ENCODE measurements at regions of chr4 and their contacts with region 1.

Region 1: DNA sequence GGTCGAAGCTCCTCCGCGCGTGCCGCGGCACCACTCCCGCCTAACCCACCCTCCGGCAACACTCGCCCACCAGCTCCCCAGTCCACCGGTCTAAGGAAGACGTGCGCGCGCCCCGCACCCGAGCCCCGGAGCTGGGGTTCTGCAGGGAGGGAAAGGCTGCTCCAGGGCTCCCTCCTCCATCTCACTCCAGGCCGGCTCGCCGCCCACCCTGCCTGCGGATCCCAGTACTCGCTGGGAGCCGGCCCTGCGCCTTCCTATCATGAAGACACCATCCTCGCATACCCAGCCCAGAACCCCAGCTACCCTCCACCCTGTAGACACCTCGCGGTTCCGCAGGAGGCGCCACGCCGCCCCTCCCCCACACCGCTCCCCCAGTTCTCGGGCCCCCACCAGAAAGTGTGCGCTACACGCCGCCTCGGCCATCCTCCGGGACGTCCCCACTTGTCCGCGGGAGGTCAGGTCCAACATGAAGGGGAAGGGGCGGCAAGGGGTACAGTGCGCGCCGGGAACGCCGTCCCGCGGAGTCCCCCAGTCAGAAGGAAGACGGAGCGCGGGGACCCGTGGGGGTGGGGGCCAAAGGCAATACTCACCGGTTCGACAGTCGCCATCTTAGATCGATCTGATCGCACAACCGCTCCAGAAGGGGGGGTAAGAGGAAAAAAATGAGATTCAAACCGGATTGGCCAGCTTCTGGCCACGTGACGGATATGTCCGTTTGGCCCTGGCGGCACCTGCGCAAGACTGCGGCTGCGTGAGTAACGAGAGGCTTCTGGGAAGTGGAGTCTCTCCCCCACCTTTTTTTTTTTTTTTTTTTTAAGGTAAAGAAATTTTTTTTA is at the start of gene EIF4E:
- DNase-seq: peak; percentile 81 to 99 (median 97)
- ATAC-seq: peak; percentile 88
- H3K4me3 ChIP-seq: peak within 1 kb of the TSS; percentile 96
- H3K4me3 Mint-ChIP-seq: peak within 1 kb of the TSS; percentile 91 to 100 (median 96)
- H3K27ac ChIP-seq: peak within 1 kb of the TSS; percentile 88
- H3K27ac Mint-ChIP-seq: peak within 1 kb of the TSS; percentile 88 to 98 (median 97)
- H3K4me1 ChIP-seq: peaks cover 9 to 15% of the 10 kb centered on the region in 2 donors
- H3K4me1 Mint-ChIP-seq: peaks cover 12 to 52% (median 38%) of the 10 kb centered on the region in 7 donors
- H3K27me3 ChIP-seq: no peaks in the 10 kb centered on the region
- H3K27me3 Mint-ChIP-seq: peaks cover 0 to 4% (median 0%) of the 10 kb centered on the region in 5 donors
- total RNA-seq, gene EIF4E: 53.6 to 96.1 (median 63.0) TPM

Region 2: GRCh38 chr4:98143001-98143899 is 785.5 kb before region 1 on chr4 and contains the start of gene STPG2:
- CTCF ChIA-PET with region 1: interaction called, 7 read pairs
- POLR2A ChIA-PET with region 1: interaction called, 4 read pairs
- intact Hi-C with region 1: loop called (anchors 1 kb)
- DNase-seq: peak; percentile 85 to 93 (median 91)
- ATAC-seq: peak; percentile 100
- H3K4me3 ChIP-seq: peak within 1 kb of the TSS; percentile 85
- H3K4me3 Mint-ChIP-seq: peak within 1 kb of the TSS; percentile 87 to 99 (median 94)
- H3K27ac ChIP-seq: peak within 1 kb of the TSS; percentile 84
- H3K27ac Mint-ChIP-seq: peak within 1 kb of the TSS; percentile 96 to 99 (median 98)
- H3K4me1 ChIP-seq: peaks cover 6 to 10% of the 10 kb centered on the region in 2 donors
- H3K4me1 Mint-ChIP-seq: peaks cover 12 to 28% (median 24%) of the 10 kb centered on the region in 7 donors
- H3K27me3 ChIP-seq: no peaks in the 10 kb centered on the region
- H3K27me3 Mint-ChIP-seq: peaks cover 0 to 16% (median 0%) of the 10 kb centered on the region in 5 donors
- total RNA-seq, gene STPG2: 0.19 to 0.47 (median 0.30) TPM in 4 of 5 experiments, not detected in the other

Region 3: DNA sequence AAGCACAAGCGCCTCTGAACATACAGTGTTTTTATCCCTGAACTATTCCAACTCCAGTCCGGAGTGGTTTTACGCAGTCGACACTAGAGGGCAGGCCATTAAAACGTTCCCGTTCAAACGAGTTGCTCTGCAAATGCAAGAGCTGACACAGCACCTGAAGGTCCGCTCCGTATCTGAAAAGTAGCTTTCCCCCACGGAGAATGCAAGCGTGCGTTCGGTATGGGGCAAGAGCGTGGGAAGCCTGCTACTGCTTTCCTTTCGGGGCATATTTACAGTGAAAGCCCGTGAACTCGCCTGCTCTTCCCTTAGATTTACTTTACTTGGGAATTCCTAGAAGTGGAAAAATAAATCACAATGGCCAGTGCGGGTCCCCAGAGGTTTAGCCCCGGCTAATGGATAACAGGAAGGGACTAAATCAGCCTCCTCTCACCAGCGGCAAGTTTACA is 461.1 kb before region 1 on chr4:
- CTCF ChIA-PET with region 1: interaction called, 3 read pairs
- POLR2A ChIA-PET with region 1: interaction called, 3 read pairs
- intact Hi-C with region 1: loop called (anchors 2 kb)
- DNase-seq: peak; percentile 14 to 76 (median 65)
- ATAC-seq: peak; percentile 93
- H3K4me3 ChIP-seq: peak overlapping the region; percentile 11
- H3K4me3 Mint-ChIP-seq: peak overlapping the region; percentile 66 to 87 (median 74)
- H3K27ac ChIP-seq: no peak overlapping the region
- H3K27ac Mint-ChIP-seq: peak overlapping the region in 3 of 9 donors; percentile 24 to 34 (median 32)
- H3K4me1 ChIP-seq: no peaks in the 10 kb centered on the region
- H3K4me1 Mint-ChIP-seq: peaks cover 7 to 40% (median 24%) of the 10 kb centered on the region in 7 donors
- H3K27me3 ChIP-seq: no peaks in the 10 kb centered on the region
- H3K27me3 Mint-ChIP-seq: no peaks in the 10 kb centered on the region

Region 4: DNA sequence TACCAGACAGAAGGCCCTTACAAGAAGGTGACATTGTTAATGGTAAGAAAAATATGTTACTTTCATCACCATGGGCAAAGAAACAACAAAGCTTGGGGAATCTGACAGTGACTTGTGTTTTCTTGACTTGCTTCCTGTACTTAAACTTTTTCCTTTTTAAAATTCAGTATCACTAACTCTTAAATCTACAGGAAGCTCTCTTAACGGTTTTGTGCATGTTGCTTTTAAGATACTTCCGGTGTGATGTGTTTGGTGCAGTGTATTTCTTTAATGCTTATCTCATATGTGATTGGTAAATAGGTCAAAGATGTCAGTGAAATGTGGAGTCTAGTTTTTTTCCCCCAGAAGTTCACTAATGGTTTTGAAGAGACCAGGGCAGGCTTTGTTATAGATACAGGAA is 114.6 kb after region 1 on chr4:
- CTCF ChIA-PET with region 1: no interaction called
- POLR2A ChIA-PET with region 1: no interaction called
- intact Hi-C with region 1: loop called in 1 of 2 experiments (anchors 5 kb)
- DNase-seq: peak in 7 of 9 donors; percentile 22 to 79 (median 66)
- ATAC-seq: peak; percentile 93
- H3K4me3 ChIP-seq: no peak overlapping the region
- H3K4me3 Mint-ChIP-seq: peak overlapping the region in 9 of 10 donors; percentile 11 to 79 (median 64)
- H3K27ac ChIP-seq: peak overlapping the region; percentile 55
- H3K27ac Mint-ChIP-seq: peak overlapping the region; percentile 80 to 90 (median 85)
- H3K4me1 ChIP-seq: peaks cover 14 to 15% of the 10 kb centered on the region in 2 donors
- H3K4me1 Mint-ChIP-seq: peaks cover 10 to 31% (median 24%) of the 10 kb centered on the region in 7 donors
- H3K27me3 ChIP-seq: no peaks in the 10 kb centered on the region
- H3K27me3 Mint-ChIP-seq: no peaks in the 10 kb centered on the region

Region 5: DNA sequence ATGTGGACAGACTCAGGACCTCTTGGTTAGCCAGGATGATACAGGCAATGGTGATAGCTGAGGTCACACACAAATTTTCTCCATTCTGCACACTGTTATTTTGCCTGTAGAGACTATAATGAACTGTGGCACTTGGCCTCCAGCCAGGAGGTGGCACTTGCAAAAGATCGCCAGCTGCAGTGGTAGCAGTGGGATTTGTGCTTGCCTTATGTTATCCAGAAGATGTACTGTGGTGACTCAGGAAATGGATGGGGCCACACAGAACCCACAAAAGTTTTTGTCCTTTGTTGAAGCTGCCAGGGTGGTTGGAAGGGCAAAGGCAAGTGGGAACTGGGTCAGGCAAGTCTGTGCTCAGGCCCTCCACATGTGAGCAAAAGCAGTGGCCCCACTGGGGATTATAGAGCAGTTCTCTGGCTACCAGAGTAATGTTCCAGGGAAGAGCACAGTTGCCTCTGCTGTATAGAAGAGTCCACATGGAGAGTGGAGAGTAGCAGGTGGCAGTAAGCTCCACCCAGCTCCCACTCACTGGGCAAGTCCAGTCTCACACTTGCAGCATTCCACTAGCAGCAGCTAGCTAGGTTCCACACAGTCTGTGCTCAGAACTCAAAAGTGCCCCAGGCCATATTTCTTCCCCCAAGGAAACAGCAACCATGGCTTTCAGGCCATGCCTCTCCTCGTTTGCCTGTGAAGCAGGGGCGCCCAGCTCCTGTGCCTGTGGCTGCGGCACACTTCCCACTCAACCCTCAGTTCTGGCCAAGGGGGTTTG is 576.3 kb after region 1 on chr4:
- CTCF ChIA-PET with region 1: no interaction called
- POLR2A ChIA-PET with region 1: no interaction called
- intact Hi-C with region 1: loop called in 1 of 2 experiments (anchors 2 kb)
- DNase-seq: no peak
- ATAC-seq: no peak
- H3K4me3 ChIP-seq: no peak overlapping the region
- H3K4me3 Mint-ChIP-seq: peak overlapping the region in 3 of 10 donors; percentile 14 to 76 (median 56)
- H3K27ac ChIP-seq: no peak overlapping the region
- H3K27ac Mint-ChIP-seq: peak overlapping the region in 8 of 9 donors; percentile 14 to 91 (median 40)
- H3K4me1 ChIP-seq: peaks cover 8 to 33% of the 10 kb centered on the region in 2 donors
- H3K4me1 Mint-ChIP-seq: peaks cover 31 to 63% (median 57%) of the 10 kb centered on the region in 7 donors
- H3K27me3 ChIP-seq: no peaks in the 10 kb centered on the region
- H3K27me3 Mint-ChIP-seq: peaks cover 0 to 2% (median 0%) of the 10 kb centered on the region in 5 donors

Region 6: DNA sequence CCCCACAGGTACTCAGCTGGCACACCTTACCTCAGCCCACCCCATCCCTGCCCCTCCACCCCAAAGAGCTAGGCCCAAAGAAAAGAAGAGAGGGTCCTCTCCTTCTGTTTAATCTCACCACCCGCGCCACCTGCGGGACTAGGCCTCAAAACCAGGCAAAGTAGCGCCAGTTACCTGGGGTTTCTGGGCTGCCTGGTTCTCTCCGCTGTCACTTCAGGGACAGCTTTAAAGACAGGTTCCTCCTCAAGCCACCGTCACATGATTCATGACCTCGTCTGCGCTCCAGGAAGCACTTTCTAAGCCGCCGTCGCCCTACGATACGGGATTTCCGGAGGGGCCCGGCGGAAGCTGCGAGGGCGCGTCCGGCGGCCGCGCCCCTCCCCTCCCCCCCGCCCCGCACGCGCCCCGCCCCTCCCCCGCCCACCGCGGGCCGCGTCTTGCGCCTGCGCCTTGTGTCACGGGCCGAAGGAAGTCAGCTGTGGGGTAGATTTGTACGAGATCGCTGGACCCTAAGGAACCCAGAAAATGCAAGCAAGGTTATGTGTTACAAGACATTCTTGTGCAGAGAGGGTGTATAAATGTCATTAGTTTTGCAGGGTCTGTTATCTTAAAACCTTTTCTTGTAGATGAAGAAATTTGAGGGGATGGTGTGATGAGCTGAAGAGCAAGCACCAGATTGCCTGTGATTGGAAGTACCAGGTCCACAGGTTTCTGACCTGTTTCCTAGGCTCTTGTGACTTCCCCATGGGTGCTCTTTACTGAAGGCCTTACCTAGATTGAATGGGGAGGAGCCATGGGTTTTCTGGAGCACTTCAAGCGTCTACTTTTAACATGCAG is 965.7 kb after region 1 on chr4 and contains the start of gene LAMTOR3:
- CTCF ChIA-PET with region 1: no interaction called
- POLR2A ChIA-PET with region 1: interaction called, 3 read pairs
- intact Hi-C with region 1: loop called in 1 of 2 experiments (anchors 1 kb)
- DNase-seq: peak; percentile 70 to 92 (median 89)
- ATAC-seq: peak; percentile 98
- H3K4me3 ChIP-seq: peak within 1 kb of the TSS; percentile 92
- H3K4me3 Mint-ChIP-seq: peak within 1 kb of the TSS; percentile 96 to 99 (median 98)
- H3K27ac ChIP-seq: peak within 1 kb of the TSS; percentile 96
- H3K27ac Mint-ChIP-seq: peak within 1 kb of the TSS; percentile 96 to 99 (median 98)
- H3K4me1 ChIP-seq: peaks cover 13 to 25% of the 10 kb centered on the region in 2 donors
- H3K4me1 Mint-ChIP-seq: peaks cover 25 to 55% (median 52%) of the 10 kb centered on the region in 7 donors
- H3K27me3 ChIP-seq: no peaks in the 10 kb centered on the region
- H3K27me3 Mint-ChIP-seq: no peaks in the 10 kb centered on the region
- total RNA-seq, gene LAMTOR3: 20.1 to 32.6 (median 27.4) TPM

Region 7: GRCh38 chr4:100816436-100817045 is 1887.8 kb after region 1 on chr4:
- CTCF ChIA-PET with region 1: no interaction called
- POLR2A ChIA-PET with region 1: no interaction called
- intact Hi-C with region 1: no loop called
- DNase-seq: no peak
- ATAC-seq: no peak
- H3K4me3 ChIP-seq: no peak overlapping the region
- H3K4me3 Mint-ChIP-seq: no peak overlapping the region
- H3K27ac ChIP-seq: no peak overlapping the region
- H3K27ac Mint-ChIP-seq: no peak overlapping the region
- H3K4me1 ChIP-seq: no peaks in the 10 kb centered on the region
- H3K4me1 Mint-ChIP-seq: peaks cover 0 to 4% (median 0%) of the 10 kb centered on the region in 7 donors
- H3K27me3 ChIP-seq: no peaks in the 10 kb centered on the region
- H3K27me3 Mint-ChIP-seq: peaks cover 0 to 14% (median 3%) of the 10 kb centered on the region in 5 donors